Left ventricle myocardium superior (tissue), 1 donor: ENCODE measurements at regions of chr15 and their contacts with region 1.

Region 1: GRCh38 chr15:43941555-43941954 is 114.8 kb downstream of the WDR76 start:
- DNase-seq: no peak
- ATAC-seq: no peak

Region 2: GRCh38 chr15:44033894-44034293 is 92.3 kb after region 1 on chr15:
- intact Hi-C with region 1: no loop called
- DNase-seq: no peak
- ATAC-seq: no peak

Region 3: DNA sequence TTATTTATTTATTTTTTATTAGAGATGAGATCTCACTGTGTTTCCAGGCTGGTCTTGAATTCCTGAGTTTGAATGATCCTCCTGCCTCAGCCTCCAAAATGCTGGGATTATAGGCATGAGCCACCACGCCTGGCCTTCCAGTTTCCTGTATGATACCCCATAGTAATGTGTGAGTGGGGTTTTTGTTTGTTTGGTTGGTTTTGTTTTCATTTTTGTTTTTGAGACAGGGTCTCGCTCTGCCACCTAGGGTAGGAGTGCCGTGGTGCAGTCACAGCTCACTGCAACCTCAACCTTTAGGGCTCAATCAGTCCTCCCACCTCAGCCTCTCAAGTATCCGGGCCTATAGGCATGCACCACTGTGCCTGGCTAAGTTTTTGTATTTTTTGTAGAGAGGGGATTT is 377.8 kb after region 1 on chr15:
- intact Hi-C with region 1: loop called (anchors 5 kb)
- DNase-seq: no peak
- ATAC-seq: no peak